Activated CD4-positive, alpha-beta T cell treated with anti-CD3 and anti-CD28 coated beads, Interleukin-2, amount 10 ng/mL, durations not matched to agents 7 days and 5 days (primary cell): ENCODE measurements at regions of chr21 and their contacts with region 1.

Region 1: GRCh38 chr21:34989337-34990151 is 59.6 kb downstream of the RUNX1 start:
- DNase-seq: peak; percentile 22
- H3K4me3 Mint-ChIP-seq: no peak overlapping the region
- H3K27ac Mint-ChIP-seq: peak overlapping the region; percentile 7
- H3K4me1 Mint-ChIP-seq: peaks cover 70% of the 10 kb centered on the region
- H3K27me3 Mint-ChIP-seq: no peaks in the 10 kb centered on the region

Region 2: DNA sequence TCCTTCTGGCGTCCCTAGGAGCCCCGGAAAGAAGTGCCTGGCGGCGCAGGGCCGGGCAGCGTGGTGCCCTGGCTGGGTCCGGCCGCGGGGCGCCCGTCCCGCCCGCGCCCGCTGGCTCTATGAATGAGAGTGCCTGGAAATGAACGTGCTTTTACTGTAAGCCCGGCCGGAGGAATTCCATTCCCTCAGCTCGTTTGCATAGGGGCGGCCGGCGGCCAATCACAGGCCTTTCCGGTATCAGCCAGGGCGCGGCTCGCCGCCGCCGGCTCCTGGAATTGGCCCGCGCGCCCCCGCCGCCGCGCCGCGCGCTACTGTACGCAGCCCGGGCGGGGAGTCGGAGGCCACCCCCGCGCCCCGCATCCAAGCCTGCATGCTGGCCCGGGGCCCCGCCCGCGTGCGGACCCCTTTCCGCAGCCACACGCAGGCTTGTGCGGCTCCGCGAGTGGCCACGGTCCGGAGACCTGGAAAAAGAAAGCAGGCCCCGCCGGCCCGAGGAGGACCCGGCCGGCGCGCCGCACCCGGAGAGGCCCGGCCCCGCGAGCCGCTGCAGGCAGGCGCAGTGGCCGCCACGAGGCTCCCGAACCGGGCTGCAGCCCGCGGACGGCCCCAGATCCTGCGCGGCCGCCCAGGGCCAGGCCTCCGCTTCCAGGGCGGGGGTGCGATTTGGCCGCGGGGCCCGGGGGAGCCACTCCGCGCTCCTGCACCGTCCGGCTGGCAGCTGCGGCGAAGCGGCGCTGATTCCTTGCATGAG is 100.8 kb before region 1 on chr21:
- CTCF ChIA-PET with region 1: interaction called, 13 read pairs
- POLR2A ChIA-PET with region 1: no interaction called
- DNase-seq: peak; percentile 80
- H3K4me3 Mint-ChIP-seq: peak overlapping the region; percentile 89
- H3K27ac Mint-ChIP-seq: peak overlapping the region; percentile 98
- H3K4me1 Mint-ChIP-seq: peaks cover 52% of the 10 kb centered on the region
- H3K27me3 Mint-ChIP-seq: no peaks in the 10 kb centered on the region